ENCODE measurements at regions of chr10 and their contacts with region 1.

Region 1: DNA sequence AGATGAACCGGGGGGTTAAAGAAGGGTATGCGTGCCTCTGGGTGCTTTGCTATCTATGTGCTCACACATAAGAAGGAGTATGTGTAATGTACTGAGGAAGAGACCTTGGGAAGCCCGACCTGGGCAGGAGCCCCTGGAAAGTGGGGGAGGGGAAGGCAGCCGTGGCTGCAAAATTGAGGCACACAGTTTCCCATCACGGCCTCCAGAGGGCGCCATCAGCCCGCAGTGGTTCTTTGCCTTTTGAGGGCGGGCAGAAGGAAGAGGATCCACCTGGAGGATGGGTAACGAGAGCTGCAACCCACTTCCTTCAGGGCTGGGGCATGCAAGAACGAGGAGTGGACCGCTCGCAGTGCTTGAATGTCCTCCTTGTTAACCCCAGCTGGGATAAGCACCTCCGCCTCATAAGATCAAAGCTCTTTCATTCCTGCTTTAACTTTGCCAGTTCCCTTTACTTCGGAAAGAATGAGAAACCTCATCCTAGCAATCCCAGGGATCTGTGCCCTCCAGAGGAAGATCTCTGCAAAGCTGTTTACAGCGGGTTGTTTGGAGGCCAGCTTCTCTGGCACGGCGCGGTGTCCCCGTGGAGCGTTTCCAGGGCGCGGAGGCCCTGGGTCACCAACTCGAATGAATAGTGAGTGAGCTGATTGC is 77.9 kb downstream of the PCGF5 start:
- DNase-seq: peak; percentile 85

Region 2: GRCh38 chr10:91367127-91367531 is 68.8 kb after region 1 on chr10:
- intact Hi-C with region 1: loop called (anchors 5 kb)
- DNase-seq: no peak

Region 3: DNA sequence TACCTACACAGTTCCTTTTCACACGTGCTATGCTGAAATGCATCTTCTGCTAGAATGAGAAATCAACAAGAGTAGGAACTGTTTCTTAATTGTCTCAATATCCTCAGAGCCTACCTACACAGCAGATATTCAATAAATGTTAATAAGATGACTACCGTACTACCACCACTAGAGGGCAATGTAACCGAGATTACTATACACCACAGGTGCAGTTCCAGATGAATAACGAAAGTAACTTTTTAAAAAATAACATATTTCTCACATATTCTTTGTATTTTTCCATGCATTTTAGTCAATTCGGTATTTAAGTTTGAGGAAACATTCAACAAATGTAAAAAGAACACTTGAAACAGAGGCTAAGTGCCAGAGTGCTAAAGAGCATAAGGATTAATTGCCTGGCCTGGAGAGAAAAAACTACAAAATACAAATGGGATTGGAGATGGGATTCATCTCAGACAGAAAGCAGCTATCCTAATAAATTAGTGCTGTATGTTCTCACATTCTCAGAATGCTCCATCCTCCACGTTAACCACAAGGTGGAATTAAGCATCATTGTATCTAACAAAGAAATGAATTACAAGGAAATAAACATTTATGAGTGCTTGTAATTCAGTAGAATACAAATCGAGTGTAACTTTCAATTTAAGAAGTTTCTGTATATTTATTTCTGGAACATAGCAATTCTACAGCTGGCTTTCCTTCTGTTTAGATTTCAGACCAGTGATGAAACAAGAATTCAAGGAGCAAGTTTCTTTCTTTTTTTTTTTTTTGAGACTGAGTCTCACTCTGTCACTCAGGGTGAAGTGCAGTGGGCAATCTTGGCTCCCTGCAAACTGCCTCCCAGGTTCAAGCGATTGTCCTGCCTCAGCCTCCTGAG is 91.5 kb after region 1 on chr10:
- intact Hi-C with region 1: loop called (anchors 2 kb)
- DNase-seq: no peak